ENCODE measurements at regions of chr17 and their contacts with region 1.

Region 1: DNA sequence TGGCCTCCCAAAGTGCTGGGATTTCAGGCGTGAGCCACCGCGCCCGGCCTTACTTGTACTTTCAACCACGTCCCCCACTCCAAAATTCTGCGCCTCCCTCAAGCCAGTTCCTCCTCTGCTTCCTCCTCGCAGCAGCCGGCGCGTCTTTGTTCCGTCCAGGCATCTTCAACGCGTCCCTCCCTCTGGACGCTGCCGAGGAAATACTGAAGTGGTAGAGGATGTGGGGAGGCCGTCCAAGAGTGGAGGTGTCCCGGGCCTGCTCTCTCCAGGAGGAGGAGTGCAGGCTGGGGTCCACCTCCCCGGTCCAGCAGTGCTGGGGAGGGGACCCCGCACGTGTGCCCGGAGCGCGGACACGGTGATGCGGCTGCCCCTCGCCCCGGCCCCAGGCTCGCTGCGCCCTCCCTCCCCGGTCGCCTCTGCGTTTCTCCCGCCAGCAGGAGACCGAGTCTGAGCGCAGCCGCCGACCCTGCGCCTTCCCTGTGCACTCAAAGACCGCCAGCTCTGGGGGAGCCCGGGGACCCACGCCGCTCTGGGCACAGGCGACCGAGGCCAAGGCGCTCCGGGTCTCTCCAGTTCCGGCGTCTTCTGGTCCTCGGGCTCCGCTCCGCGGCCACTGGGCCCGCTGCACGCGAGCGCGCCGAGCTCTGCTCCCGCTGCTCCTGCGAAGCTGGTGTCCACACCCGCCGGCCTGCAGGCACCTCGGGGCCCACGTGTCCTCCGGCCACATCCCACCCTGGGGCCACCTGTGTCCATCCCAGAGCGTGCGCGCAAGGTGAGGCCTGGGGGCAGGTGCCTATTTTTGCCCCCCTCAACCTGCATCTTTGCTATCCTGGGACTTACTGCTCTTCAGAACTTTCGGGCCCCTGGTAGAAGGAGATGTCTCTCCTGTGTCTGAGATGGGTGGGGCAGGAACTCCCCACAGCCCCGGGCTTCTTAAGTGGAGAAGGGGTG is 31.7 kb downstream of the OSBPL7 start:
- DNase-seq: peak; percentile 83 to 88
- H3K4me3 ChIP-seq: peak overlapping the region; percentile 39
- H3K4me3 Mint-ChIP-seq: peak overlapping the region; percentile 70
- H3K27ac Mint-ChIP-seq: no peak overlapping the region
- H3K4me1 ChIP-seq: peaks cover 9% of the 10 kb centered on the region; the same call in 1 of the 2 replicates
- H3K4me1 Mint-ChIP-seq: peaks cover 17% of the 10 kb centered on the region
- H3K27me3 ChIP-seq: peaks cover 5% of the 10 kb centered on the region
- H3K27me3 Mint-ChIP-seq: peaks cover 47% of the 10 kb centered on the region
- CTCF ChIP-seq: peak; percentile 76 to 90

Region 2: GRCh38 chr17:47733047-47733673 is 56.7 kb before region 1 on chr17 and contains the start of gene TBX21:
- CTCF ChIA-PET with region 1: interaction called, 18 read pairs
- POLR2A ChIA-PET with region 1: no interaction called
- intact Hi-C with region 1: loop called (anchors 1 kb)
- DNase-seq: peak; percentile 93 to 94
- H3K4me3 ChIP-seq: peak within 1 kb of the TSS; percentile 37
- H3K4me3 Mint-ChIP-seq: peak within 1 kb of the TSS; percentile 68
- H3K27ac Mint-ChIP-seq: no peak within 1 kb of the TSS
- H3K4me1 ChIP-seq: peaks cover 9% of the 10 kb centered on the region
- H3K4me1 Mint-ChIP-seq: peaks cover 7% of the 10 kb centered on the region
- H3K27me3 ChIP-seq: peaks cover 18% of the 10 kb centered on the region
- H3K27me3 Mint-ChIP-seq: peaks cover 45% of the 10 kb centered on the region
- CTCF ChIP-seq: peak; percentile 55 to 89
- total RNA-seq, gene TBX21: not detected in 2 replicates

Region 3: DNA sequence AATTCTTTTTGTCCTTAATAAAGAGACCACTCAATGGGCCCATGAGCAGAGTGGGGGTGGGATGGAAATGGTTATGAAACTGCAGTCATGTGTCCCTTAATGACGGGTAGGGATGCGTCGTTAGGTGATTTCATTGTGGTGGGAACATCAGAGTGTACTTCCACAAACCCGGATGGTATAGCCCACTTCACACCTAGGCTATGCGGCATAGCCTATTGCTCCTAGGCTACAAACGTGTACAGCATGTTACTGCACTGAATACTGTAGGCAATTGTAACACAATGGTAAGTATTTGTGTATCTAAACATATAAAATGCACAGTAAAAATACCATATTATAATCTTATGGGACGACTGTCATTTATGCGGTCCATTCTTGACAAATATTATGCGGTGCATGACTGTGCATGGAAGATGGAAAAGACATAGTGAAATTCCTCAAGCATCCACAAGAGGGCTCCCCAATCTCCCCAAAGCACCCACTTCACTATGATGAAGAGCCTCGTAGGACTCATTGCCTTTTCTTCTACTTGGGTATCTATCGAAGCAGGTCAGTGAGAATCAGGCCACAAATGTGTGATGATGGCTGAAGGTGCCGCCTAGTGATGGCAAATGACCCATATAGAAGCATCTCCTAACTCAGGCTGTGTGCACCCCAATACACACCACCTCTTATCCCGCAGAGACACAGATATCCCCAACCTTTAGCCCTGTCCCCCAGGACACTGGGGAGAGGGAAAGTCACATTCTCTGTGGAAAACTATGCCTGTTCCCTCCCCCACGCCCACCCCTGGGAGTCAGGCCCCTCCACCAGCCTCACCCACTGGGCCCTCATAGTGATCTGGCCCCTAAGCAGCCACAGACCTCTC is 13.3 kb before region 1 on chr17:
- CTCF ChIA-PET with region 1: interaction called, 10 read pairs
- POLR2A ChIA-PET with region 1: no interaction called
- intact Hi-C with region 1: loop called (anchors 1 kb)
- DNase-seq: peak; percentile 60 to 79
- H3K4me3 ChIP-seq: no peak overlapping the region
- H3K4me3 Mint-ChIP-seq: no peak overlapping the region
- H3K27ac Mint-ChIP-seq: no peak overlapping the region
- H3K4me1 ChIP-seq: no peaks in the 10 kb centered on the region
- H3K4me1 Mint-ChIP-seq: no peaks in the 10 kb centered on the region
- H3K27me3 ChIP-seq: no peaks in the 10 kb centered on the region
- H3K27me3 Mint-ChIP-seq: peaks cover 28% of the 10 kb centered on the region
- CTCF ChIP-seq: peak; percentile 94 to 99

Region 4: DNA sequence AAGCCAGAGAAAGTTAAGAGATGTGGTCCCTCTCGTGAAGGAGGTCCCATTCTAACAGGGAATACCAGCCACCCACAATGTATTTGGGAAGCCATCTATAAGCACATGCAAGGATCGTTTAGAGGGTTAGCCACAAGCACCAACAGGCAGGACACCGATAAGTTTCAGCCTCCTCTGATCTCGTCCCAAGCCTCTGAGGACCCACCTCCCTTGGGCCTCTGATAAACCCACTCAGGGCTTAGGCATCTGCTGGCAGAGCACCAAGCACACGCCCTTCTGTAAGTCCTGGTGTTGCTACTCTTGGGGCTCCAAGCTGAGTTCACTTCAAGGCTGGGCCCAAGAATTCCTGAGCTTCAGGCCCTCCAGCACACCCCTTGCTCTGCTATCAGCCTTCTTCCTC is 146.1 kb after region 1 on chr17:
- CTCF ChIA-PET with region 1: no interaction called
- POLR2A ChIA-PET with region 1: no interaction called
- intact Hi-C with region 1: no loop called
- DNase-seq: no peak
- H3K4me3 ChIP-seq: no peak overlapping the region
- H3K4me3 Mint-ChIP-seq: no peak overlapping the region
- H3K27ac Mint-ChIP-seq: no peak overlapping the region
- H3K4me1 ChIP-seq: 0 out of 2 replicates have a peak, but pooled peaks cover 6% of the 10 kb centered on the region
- H3K4me1 Mint-ChIP-seq: peaks cover 5% of the 10 kb centered on the region
- H3K27me3 ChIP-seq: no peaks in the 10 kb centered on the region
- H3K27me3 Mint-ChIP-seq: no peaks in the 10 kb centered on the region
- CTCF ChIP-seq: no peak